ENCODE measurements at regions of chr10 and their contacts with region 1.

Region 1: GRCh38 chr10:17643755-17644484 is at the start of gene STAM:
- DNase-seq: peak; percentile 86
- ATAC-seq: peak; percentile 94
- H3K4me3 Mint-ChIP-seq: peak within 1 kb of the TSS; percentile 94
- H3K27ac Mint-ChIP-seq: peak within 1 kb of the TSS; percentile 100
- H3K4me1 Mint-ChIP-seq: peaks cover 21% of the 10 kb centered on the region
- H3K27me3 Mint-ChIP-seq: no peaks in the 10 kb centered on the region
- CTCF ChIP-seq: no peak
- total RNA-seq, gene STAM: 20.7 to 24.2 TPM (median 22.9 TPM) in 3 replicates

Region 2: GRCh38 chr10:17617031-17617911 is 26.6 kb before region 1 on chr10 and contains the start of gene HACD1:
- CTCF ChIA-PET with region 1: interaction called, 15 read pairs
- POLR2A ChIA-PET with region 1: interaction called, 20 read pairs
- DNase-seq: peak; percentile 78
- ATAC-seq: peak; percentile 86
- H3K4me3 Mint-ChIP-seq: peak within 1 kb of the TSS; percentile 90
- H3K27ac Mint-ChIP-seq: peak within 1 kb of the TSS; percentile 94
- H3K4me1 Mint-ChIP-seq: peaks cover 11% of the 10 kb centered on the region
- H3K27me3 Mint-ChIP-seq: no peaks in the 10 kb centered on the region
- CTCF ChIP-seq: no peak
- total RNA-seq, gene HACD1: 18.6 to 23.2 TPM (median 21.2 TPM) in 3 replicates

Region 3: DNA sequence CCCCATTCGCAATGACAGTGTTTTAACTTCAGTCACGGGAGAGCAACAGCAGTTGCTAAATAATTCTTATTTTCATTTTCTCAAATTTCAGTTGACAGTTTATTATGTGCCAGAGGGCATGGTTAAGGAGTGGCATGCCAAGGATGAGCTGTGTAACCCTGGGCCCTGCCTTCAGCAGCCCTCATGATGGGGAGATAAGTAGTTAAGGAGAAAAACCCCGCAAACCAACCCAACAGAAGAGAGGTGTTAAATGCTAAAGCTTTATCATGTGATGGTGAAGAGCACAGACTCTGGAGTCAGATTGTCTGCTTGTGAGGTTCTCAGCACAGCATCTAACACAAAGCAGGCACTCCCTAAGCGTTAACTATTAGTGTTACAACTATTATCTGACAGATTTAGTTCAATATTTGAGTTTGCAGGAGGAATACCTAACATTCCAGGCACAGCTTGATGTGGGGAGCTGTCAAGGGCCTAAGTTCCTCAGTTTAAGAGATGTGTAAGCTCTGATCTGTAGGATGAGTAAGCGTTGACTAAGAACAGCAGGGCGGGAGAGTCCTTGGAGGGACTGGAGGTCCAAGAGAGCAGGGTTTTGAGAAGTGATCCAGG is 29.6 kb after region 1 on chr10:
- CTCF ChIA-PET with region 1: interaction called, 10 read pairs
- POLR2A ChIA-PET with region 1: interaction called, 4 read pairs
- DNase-seq: peak; percentile 29
- ATAC-seq: peak; percentile 90
- H3K4me3 Mint-ChIP-seq: no peak overlapping the region
- H3K27ac Mint-ChIP-seq: peak overlapping the region; percentile 29
- H3K4me1 Mint-ChIP-seq: peaks cover 65% of the 10 kb centered on the region
- H3K27me3 Mint-ChIP-seq: no peaks in the 10 kb centered on the region
- CTCF ChIP-seq: no peak

Region 4: DNA sequence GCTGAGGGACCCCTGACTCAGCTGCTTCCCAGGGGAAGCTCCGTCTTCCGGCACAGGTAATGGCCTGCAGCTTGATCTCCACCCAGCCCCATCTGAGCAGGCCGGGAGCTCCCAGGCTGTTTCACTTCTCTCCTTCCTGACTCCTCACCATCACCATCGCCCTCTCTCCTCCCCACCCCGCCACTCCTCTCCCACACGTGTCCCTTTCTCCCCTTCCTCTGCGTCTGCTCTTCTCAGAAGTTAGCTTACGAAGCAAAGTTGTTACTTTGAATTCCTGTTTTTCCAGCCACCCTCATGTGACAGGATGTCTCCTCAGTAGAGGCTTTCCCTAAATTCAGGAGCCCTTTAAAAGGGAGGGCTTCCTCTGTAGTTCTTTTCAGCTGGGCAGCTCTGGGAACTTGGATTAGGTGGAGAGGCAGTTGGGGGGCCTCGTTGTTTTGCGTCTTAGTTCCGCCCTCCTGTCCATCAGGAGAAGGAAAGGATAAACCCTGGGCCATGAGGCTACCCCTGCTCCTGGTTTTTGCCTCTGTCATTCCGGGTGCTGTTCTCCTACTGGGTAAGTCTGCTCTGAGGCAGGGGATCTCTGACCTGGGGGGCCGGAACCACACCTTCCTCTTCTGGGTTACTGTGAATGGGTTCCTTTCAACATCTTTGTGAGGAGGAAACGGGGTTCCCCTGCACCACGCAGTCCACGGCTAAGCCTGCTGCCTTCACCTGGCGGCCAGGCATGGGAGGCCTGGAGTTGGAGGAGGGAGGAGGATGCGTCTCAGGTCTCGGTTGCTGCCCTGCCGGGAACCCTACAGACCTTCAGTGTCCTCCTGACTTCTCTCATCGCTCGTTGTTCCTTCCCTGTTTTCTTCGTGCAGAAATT is 165.3 kb after region 1 on chr10 and contains the start of gene MRC1:
- CTCF ChIA-PET with region 1: no interaction called
- POLR2A ChIA-PET with region 1: no interaction called
- DNase-seq: no peak
- ATAC-seq: peak; percentile 53
- H3K4me3 Mint-ChIP-seq: no peak within 1 kb of the TSS
- H3K27ac Mint-ChIP-seq: no peak within 1 kb of the TSS
- H3K4me1 Mint-ChIP-seq: peaks cover 11% of the 10 kb centered on the region
- H3K27me3 Mint-ChIP-seq: no peaks in the 10 kb centered on the region
- CTCF ChIP-seq: no peak
- total RNA-seq, gene MRC1: 0.33 to 0.46 TPM (median 0.44 TPM) in 3 replicates

Measured in WTC11 (cell line).